ENCODE measurements at regions of chr6 and their contacts with region 1.

Region 1: GRCh38 chr6:118565311-118565960 is 17.3 kb downstream of the PLN start:
- DNase-seq: peak; percentile 13
- ATAC-seq: peak; percentile 89
- H3K4me3 Mint-ChIP-seq: no peak overlapping the region
- H3K27ac Mint-ChIP-seq: peak overlapping the region; percentile 33
- H3K4me1 Mint-ChIP-seq: peaks cover 24% of the 10 kb centered on the region
- H3K27me3 Mint-ChIP-seq: no peaks in the 10 kb centered on the region
- CTCF ChIP-seq: peak; percentile 68

Region 2: DNA sequence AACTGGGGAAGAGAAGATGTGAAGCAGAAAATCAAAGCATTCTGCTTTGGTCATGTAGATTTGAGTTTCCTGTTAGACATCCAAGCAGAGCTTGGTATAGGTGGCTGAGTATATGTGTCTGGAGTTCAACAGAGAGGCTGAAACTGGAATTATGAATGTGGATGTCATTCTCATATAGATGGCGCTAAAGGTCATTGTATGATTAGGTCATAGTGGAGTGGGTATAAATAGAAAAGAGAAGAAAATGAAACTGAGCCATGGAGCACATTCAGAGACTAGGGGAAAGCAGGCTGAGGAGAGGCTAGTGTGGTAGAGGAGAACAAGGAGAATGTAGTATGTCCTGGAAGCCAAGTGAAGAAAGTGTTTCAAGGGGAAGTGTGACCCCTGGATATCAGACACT is 313.0 kb before region 1 on chr6:
- CTCF ChIA-PET with region 1: no interaction called
- POLR2A ChIA-PET with region 1: no interaction called
- intact Hi-C with region 1: no loop called
- DNase-seq: no peak
- ATAC-seq: peak; percentile 69
- H3K4me3 Mint-ChIP-seq: no peak overlapping the region
- H3K27ac Mint-ChIP-seq: no peak overlapping the region
- H3K4me1 Mint-ChIP-seq: peaks cover 2% of the 10 kb centered on the region
- H3K27me3 Mint-ChIP-seq: peaks cover 5% of the 10 kb centered on the region
- CTCF ChIP-seq: no peak

Region 3: DNA sequence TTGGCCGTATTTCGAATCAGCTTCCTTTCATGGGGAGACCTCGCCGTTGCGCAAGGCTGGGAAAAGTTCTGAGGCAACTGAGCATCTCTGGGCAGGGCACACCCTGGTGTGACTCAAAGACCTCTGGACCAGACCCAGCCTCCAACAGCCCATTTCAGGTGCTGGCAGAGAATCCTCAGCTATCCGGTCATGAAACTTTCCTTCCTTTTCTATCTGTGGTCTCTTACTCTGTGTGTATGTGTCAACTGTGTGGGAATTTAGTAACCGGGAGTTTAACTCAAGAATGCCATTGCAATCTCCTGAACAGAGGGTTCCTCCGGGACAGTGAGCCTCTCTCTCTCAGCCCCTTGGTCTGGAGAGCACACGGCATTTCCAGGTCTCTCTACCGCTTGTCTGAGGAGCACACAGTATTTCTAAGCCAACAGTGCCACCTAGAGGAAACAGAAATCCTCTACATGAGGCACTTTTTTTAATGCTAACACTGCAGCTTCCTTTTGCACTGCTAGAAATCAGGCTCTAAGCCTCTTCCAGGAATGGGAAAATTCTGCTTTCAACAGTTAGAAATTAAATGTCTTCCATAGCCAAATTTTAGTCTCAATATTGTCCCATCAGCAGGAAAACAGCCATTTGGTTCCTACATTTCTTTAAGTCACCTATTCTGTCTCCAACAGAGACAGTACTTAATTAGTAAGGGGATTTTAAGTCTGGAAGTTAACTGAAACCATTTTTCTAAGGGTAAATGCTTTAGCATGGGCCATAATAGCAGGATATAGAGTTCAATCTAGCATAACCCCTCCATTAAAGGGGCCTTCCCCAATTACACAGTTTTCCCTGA is 15.4 kb after region 1 on chr6:
- CTCF ChIA-PET with region 1: interaction called, 18 read pairs
- POLR2A ChIA-PET with region 1: no interaction called
- intact Hi-C with region 1: no loop called
- DNase-seq: no peak
- ATAC-seq: peak; percentile 81
- H3K4me3 Mint-ChIP-seq: no peak overlapping the region
- H3K27ac Mint-ChIP-seq: peak overlapping the region; percentile 74
- H3K4me1 Mint-ChIP-seq: no peaks in the 10 kb centered on the region
- H3K27me3 Mint-ChIP-seq: no peaks in the 10 kb centered on the region
- CTCF ChIP-seq: peak; percentile 63

Region 4: GRCh38 chr6:118635909-118636735 is 70.7 kb after region 1 on chr6:
- CTCF ChIA-PET with region 1: interaction called, 14 read pairs
- POLR2A ChIA-PET with region 1: no interaction called
- intact Hi-C with region 1: no loop called
- DNase-seq: no peak
- ATAC-seq: no peak
- H3K4me3 Mint-ChIP-seq: no peak overlapping the region
- H3K27ac Mint-ChIP-seq: no peak overlapping the region
- H3K4me1 Mint-ChIP-seq: peaks cover 79% of the 10 kb centered on the region
- H3K27me3 Mint-ChIP-seq: no peaks in the 10 kb centered on the region
- CTCF ChIP-seq: no peak

Region 5: DNA sequence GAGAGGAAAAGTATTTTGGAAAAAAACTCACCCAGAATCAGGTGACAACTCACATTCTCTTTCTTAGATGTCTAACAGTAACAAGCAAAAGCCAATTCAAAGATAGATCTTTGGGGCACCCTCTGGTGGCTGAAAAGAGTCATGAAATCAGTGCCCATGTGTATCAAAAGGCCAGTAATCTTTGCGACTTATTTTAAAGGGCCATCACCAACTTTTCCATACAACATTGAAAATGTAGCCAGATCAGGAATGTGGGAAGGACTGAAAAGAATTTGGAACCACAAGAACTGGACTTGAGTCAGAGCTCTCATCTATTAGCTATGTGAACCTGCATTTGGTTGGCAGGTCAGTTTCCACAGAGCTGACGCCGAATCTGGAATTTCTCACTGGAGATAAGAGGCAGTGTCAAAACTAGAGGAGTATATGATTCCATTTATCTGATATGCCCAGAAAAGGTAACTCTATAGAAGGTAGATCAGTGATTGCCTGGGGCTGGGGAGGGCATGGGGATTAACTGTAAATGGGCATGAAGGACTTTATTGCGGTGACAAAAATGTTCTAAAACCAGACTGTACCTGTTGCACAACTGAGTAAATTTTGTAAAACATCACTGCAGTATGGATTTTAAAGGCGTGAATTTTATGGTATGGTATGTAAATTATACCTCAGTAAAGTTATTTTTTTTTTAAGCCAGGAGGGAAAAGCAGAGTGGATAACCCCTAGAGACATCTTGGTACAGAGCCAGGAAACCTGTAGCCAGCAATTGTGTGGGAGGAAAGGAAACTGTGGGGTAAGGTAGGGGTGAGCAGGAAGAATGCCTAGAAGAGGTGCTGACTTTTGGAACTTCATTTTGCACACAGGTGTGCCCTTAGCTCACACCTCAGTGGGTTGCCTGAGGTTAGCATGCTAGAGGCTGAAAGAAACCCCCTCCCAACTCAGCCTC is 211.4 kb after region 1 on chr6:
- CTCF ChIA-PET with region 1: interaction called, 16 read pairs
- POLR2A ChIA-PET with region 1: no interaction called
- intact Hi-C with region 1: loop called (anchors 10 kb)
- DNase-seq: peak; percentile 88
- ATAC-seq: peak; percentile 92
- H3K4me3 Mint-ChIP-seq: no peak overlapping the region
- H3K27ac Mint-ChIP-seq: peak overlapping the region; percentile 54
- H3K4me1 Mint-ChIP-seq: peaks cover 23% of the 10 kb centered on the region
- H3K27me3 Mint-ChIP-seq: no peaks in the 10 kb centered on the region
- CTCF ChIP-seq: peak; percentile 87

Region 6: DNA sequence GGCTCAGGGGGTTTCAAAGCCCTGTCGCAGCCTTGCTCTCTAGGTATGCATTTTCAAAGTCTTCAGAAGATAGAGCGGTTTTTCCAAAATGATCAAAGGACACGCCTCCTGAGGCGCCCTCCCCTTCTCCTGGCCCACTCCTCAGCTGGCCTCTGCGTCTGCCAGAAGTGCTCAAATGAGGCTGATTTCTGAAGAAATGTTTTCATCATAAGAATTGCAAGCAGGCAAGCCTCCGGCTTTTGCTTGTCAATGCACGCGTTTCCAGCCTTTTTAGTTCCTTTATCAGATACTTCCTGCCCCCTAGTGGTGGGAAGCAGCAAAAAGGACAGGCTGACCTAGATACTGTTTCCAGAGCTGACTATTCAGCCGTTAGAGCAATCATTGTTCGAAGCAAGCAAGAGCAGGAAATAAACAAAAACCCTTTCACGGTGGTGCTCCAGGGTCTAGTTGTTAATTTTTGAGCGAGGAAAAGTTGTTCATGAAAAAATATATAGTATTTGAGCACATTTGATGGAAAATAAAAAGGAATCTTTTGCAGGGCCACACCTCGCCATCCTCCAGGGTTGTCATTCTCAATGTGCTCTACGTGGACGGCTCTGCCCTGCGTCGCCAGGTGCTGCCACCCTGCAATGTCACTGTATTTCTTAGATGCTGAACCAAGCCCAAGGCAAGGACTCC is 235.1 kb after region 1 on chr6:
- CTCF ChIA-PET with region 1: interaction called, 31 read pairs
- POLR2A ChIA-PET with region 1: no interaction called
- intact Hi-C with region 1: loop called (anchors 10 kb)
- DNase-seq: peak; percentile 95
- ATAC-seq: peak; percentile 97
- H3K4me3 Mint-ChIP-seq: peak overlapping the region; percentile 63
- H3K27ac Mint-ChIP-seq: peak overlapping the region; percentile 76
- H3K4me1 Mint-ChIP-seq: peaks cover 34% of the 10 kb centered on the region
- H3K27me3 Mint-ChIP-seq: no peaks in the 10 kb centered on the region
- CTCF ChIP-seq: peak; percentile 85